OCI-LY7 (cell line): ENCODE measurements at regions of chr1 and their contacts with region 1.

Region 1: DNA sequence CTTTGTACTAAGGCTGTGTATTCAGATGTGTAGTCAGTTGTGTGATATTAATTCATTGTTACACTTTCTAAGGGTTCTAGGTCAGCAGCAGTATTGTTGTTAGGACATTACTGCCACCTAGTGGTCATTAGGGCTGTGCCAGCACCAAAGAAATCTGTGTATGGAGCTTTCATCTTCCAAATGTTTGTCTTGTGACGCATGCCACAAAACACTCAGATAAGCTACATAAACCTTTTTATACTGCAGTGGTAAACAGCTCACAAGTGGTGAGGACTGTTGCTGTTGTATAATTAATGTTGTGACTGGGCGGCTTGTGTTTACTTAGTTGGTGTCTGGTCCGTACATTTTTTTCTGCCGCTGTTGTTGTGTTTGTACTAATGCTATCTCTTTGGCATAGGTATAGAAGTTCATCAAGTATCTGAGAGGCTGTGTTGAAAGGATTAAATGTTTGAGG is 51.7 kb downstream of the S1PR1 start:
- DNase-seq: peak; percentile 81
- H3K4me3 ChIP-seq: no peak overlapping the region
- H3K27ac ChIP-seq: no peak overlapping the region
- H3K4me1 ChIP-seq: peaks cover 17% of the 10 kb centered on the region
- CTCF ChIP-seq: peak; percentile 98

Region 2: GRCh38 chr1:100921109-100921706 is 367.3 kb before region 1 on chr1:
- CTCF ChIA-PET with region 1: no interaction called
- POLR2A ChIA-PET with region 1: interaction called, 4 read pairs
- intact Hi-C with region 1: loop called (anchors 1 kb)
- DNase-seq: peak; percentile 75
- H3K4me3 ChIP-seq: no peak overlapping the region
- H3K27ac ChIP-seq: no peak overlapping the region
- H3K4me1 ChIP-seq: peaks cover 12% of the 10 kb centered on the region
- CTCF ChIP-seq: peak; percentile 86

Region 3: GRCh38 chr1:101025657-101026504 is 262.6 kb before region 1 on chr1 and contains the start of gene DPH5:
- CTCF ChIA-PET with region 1: no interaction called
- POLR2A ChIA-PET with region 1: interaction called, 4 read pairs
- intact Hi-C with region 1: loop called (anchors 10 kb)
- DNase-seq: peak; percentile 92
- H3K4me3 ChIP-seq: peak within 1 kb of the TSS; percentile 78
- H3K27ac ChIP-seq: peak within 1 kb of the TSS; percentile 23
- H3K4me1 ChIP-seq: peaks cover 41% of the 10 kb centered on the region
- CTCF ChIP-seq: no peak
- total RNA-seq, gene DPH5: 19.4 and 20.3 TPM in 2 replicates

Region 4: DNA sequence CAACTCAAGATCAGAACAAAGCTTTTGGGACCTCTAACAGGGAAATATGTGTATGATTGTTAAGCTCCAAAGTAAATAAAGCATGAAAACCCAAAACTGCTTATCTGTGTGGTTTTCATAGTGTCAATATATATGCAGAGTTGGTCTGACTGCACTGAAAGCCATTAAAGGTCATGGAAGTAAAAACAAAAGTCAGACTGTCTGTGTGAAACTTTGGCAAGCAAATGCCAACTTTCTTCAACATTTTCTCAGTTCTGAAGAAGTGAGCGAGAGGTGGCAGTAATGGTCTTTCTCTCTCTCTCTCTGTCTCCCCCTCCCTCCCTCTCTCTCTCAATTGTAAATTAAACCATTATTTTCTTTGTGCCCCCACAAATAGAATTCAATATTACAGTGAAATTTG is 151.8 kb before region 1 on chr1:
- CTCF ChIA-PET with region 1: interaction called, 3 read pairs
- POLR2A ChIA-PET with region 1: no interaction called
- intact Hi-C with region 1: loop called (anchors 2 kb)
- DNase-seq: peak; percentile 42
- H3K4me3 ChIP-seq: no peak overlapping the region
- H3K27ac ChIP-seq: no peak overlapping the region
- H3K4me1 ChIP-seq: peaks cover 3% of the 10 kb centered on the region
- CTCF ChIP-seq: peak; percentile 79

Region 5: DNA sequence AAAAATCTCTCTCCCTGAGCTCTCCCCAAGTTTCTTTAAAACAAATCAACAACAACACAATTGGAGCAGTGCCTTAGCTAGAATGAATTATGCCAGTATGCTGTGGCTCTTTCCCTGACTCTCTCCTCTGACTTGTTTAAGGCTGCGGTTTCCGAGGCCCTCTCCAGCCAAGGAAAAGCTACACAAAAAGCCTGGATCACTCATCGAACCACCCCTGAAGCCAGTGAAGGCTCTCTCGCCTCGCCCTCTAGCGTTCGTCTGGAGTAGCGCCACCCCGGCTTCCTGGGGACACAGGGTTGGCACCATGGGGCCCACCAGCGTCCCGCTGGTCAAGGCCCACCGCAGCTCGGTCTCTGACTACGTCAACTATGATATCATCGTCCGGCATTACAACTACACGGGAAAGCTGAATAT is 49.8 kb before region 1 on chr1:
- CTCF ChIA-PET with region 1: no interaction called
- POLR2A ChIA-PET with region 1: interaction called, 3 read pairs
- intact Hi-C with region 1: loop called (anchors 2 kb)
- DNase-seq: peak; percentile 78
- H3K4me3 ChIP-seq: no peak overlapping the region
- H3K27ac ChIP-seq: no peak overlapping the region
- H3K4me1 ChIP-seq: peaks cover 38% of the 10 kb centered on the region
- CTCF ChIP-seq: peak; percentile 97

Region 6: GRCh38 chr1:101338714-101339430 is 50.4 kb after region 1 on chr1:
- CTCF ChIA-PET with region 1: no interaction called
- POLR2A ChIA-PET with region 1: no interaction called
- intact Hi-C with region 1: no loop called
- DNase-seq: no peak
- H3K4me3 ChIP-seq: no peak overlapping the region
- H3K27ac ChIP-seq: no peak overlapping the region
- H3K4me1 ChIP-seq: no peaks in the 10 kb centered on the region
- CTCF ChIP-seq: no peak